ENCODE measurements at regions of chr19 and their contacts with region 1.

Region 1: DNA sequence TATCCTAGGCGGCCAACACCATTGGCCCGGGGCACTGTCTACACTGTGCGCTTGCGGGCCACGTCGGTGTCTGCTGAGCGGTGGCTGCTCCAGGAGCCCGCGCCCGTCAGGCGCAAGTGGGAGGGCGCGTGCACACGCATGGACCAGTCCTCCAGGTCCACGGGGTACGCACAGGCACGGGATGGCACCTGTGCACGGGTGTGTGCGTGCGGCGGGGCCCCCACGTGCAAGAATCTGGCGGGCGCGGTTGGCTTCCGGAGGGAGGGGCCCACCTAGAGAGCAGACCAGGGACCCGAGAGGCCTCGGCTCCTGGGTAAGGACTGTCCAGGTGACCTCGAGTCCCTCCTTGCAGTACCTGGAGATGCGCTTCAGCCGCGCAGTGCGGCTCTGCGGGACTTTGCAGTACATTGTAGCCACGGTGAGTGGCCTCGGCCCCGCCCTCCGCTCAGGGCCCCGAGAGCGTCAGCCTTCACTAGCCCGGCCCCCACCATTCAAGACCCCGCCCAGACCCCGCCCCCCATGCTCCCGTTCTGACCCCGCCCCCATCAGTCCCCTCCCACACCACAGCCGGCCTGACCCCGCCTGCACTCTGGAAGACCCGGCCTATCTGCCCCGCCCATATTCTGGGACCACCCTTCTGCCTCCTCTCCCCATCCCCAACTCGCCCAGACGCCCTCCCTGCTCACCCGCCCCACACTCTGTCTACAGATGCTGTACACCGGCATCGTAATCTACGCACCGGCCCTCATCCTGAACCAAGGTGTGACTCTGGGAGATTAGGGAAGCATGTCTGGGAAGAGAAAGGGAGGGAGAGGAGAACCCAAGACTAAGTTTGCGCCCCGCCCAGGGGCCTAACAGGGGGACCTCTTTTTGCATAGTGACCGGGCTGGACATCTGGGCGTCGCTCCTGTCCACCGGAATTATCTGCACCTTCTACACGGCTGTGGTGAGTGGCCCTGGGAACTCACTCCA is 2.3 kb downstream of the SLC5A5 start:
- DNase-seq: no peak
- ATAC-seq: peak in 3 of 4 donors; percentile 28 to 64 (median 47)
- H3K4me3 ChIP-seq: no peak overlapping the region
- H3K27ac ChIP-seq: no peak overlapping the region
- H3K4me1 ChIP-seq: no peaks in the 10 kb centered on the region
- H3K27me3 ChIP-seq: peaks cover 0 to 26% of the 10 kb centered on the region in 2 donors
- CTCF ChIP-seq: no peak
- POLR2A ChIP-seq: no peak

Region 2: DNA sequence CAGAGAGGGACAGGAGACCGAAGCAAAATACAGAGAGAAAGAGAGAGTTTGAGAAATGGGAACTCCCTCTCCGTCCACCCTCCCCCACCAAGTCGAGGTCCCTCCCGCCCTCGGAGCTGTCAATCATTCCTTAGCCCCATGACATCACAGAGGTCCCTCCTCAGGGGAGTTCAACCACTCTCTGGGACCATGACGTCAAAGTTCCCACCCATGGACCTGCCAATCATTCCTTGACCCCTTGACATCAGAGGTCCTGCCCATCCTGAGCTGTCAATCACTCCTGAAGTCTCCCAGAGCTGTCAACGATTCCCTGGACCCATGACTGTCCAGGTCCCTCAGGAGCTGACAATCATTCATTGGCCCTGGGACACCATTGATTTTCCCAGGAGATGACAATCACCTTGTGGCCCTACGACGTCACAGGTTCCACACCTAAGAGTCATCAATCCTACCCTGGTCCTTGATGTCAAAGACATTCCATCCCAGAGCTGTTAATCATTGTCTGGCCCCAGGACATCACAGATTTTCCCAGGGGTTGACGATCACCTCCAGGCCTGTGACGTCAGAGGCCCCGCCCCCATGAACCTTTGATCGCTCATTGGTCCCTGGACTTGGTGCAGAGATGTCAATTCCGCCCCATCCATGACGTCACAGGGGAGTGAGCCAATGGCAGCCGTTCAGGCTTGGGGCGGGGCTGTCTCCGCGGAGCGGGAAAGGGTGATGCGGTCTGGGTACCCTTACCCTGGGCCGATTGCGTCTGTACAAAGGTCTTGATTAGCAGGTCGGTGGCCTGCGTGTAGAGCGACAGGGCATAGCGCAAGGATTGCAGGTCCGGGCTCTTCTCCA is 256.9 kb before region 1 on chr19:
- intact Hi-C with region 1: no loop called
- DNase-seq: peak in 1 of 3 donors; percentile 43
- ATAC-seq: no peak
- H3K4me3 ChIP-seq: no peak overlapping the region
- H3K27ac ChIP-seq: no peak overlapping the region
- H3K4me1 ChIP-seq: no peaks in the 10 kb centered on the region
- H3K27me3 ChIP-seq: no peaks in the 10 kb centered on the region
- CTCF ChIP-seq: no peak
- POLR2A ChIP-seq: no peak

Region 3: GRCh38 chr19:17932485-17933338 is 58.6 kb after region 1 on chr19 and contains the start of gene CCDC124:
- intact Hi-C with region 1: loop called (anchors 5 to 10 kb)
- DNase-seq: peak; percentile 92 to 94 (median 92)
- ATAC-seq: peak; percentile 97 to 99 (median 98)
- H3K4me3 ChIP-seq: peak within 1 kb of the TSS; percentile 67 to 89 (median 80)
- H3K27ac ChIP-seq: peak within 1 kb of the TSS; percentile 81 to 88 (median 84)
- H3K4me1 ChIP-seq: peaks cover 0 to 11% (median 3%) of the 10 kb centered on the region in 4 donors
- H3K27me3 ChIP-seq: no peaks in the 10 kb centered on the region
- CTCF ChIP-seq: peak; percentile 84 to 91 (median 88)
- POLR2A ChIP-seq: peak; percentile 76
- total RNA-seq, gene CCDC124: 20.6 to 45.3 (median 30.7) TPM

Region 4: DNA sequence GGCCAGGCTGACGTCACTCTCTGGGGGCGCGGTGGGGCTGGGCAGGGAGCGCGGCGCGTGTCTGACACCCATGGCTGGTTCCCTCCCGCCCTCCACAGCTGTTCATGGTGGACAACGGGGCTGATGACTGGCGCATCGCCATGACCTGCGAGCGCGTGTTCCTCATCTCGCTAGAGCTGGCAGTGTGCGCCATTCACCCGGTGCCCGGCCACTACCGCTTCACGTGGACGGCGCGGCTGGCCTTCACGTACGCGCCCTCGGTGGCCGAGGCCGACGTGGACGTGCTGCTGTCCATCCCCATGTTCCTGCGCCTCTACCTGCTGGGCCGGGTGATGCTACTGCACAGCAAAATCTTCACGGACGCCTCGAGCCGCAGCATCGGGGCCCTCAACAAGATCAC is 107.5 kb after region 1 on chr19:
- intact Hi-C with region 1: no loop called
- DNase-seq: no peak
- ATAC-seq: peak in 1 of 4 donors; percentile 8
- H3K4me3 ChIP-seq: no peak overlapping the region
- H3K27ac ChIP-seq: no peak overlapping the region
- H3K4me1 ChIP-seq: no peaks in the 10 kb centered on the region
- H3K27me3 ChIP-seq: no peaks in the 10 kb centered on the region
- CTCF ChIP-seq: no peak
- POLR2A ChIP-seq: no peak

Region 5: GRCh38 chr19:18049385-18049784 is 175.3 kb after region 1 on chr19:
- intact Hi-C with region 1: no loop called
- DNase-seq: peak; percentile 97 to 98 (median 98)
- ATAC-seq: peak; percentile 66 to 83 (median 78)
- H3K4me3 ChIP-seq: peak overlapping the region in 1 of 3 donors; percentile 8
- H3K27ac ChIP-seq: peak overlapping the region; percentile 89 to 99 (median 96)
- H3K4me1 ChIP-seq: peaks cover 0 to 62% (median 20%) of the 10 kb centered on the region in 4 donors
- H3K27me3 ChIP-seq: no peaks in the 10 kb centered on the region
- CTCF ChIP-seq: no peak
- POLR2A ChIP-seq: peak; percentile 72

Measured in right lobe of liver (tissue), 6 donors.